Cardiac septum (tissue), 1 donor: ENCODE measurements at regions of chr2 and their contacts with region 1.

Region 1: DNA sequence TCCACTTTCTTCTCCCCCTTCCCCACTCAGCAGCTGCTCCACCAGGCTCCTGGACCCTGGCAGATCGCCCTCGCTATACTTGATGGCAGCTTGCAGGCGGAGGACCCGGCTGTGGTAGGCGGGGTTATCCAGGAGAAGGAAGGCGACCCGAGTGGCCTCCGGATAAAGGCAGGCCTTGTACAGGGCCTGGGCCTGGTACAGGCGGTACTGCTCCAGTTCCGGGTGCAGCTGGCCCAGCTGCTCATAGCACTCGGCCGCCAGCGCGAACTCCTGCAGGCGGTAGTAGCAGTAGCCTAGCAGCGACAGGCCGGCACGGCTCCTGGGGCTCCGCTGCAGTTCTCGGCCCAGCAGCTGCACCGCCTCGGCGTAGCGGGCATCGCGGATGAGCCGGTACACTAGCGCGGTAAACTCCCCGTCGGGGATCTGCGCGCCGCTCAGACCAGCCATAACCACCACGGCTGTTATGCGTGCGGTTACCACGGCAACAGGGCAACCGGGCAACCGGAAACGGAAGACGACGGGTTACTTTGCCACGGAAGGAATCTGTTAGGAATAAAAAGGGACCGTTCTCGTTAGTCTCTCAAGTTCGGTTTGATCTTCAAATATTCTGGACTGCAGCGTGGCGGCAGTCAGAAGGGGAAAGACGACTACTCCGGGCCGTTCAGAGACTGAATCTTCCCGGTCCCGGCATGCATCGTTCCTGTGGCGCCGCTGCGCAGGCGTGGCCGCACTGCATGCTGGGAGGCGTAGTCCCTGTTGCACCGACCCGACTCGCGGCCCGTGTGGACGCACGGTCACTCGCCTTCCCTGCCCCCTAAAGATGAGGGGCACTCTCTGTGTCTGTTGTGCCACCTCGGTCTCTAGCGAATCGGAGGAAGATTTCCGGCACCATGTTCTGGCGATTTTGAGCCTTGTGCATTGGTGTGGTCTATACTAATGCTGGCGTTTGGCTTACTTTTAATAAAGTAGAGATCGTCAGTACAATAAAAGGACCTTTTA is 226.0 kb downstream of the AGPS start:
- DNase-seq: peak; percentile 96

Region 2: GRCh38 chr2:177552422-177553175 is 66.0 kb before region 1 on chr2:
- intact Hi-C with region 1: loop called (anchors 2 kb)
- DNase-seq: peak; percentile 94